Activated CD8-positive, alpha-beta T cell treated with anti-CD3 and anti-CD28 coated beads for 36 hours (primary cell): ENCODE measurements at regions of chr18 and their contacts with region 1.

Region 1: GRCh38 chr18:32158108-32158624 is 31.7 kb upstream of the MEP1B start:
- DNase-seq: peak; percentile 81
- ATAC-seq: peak; percentile 91
- H3K4me3 Mint-ChIP-seq: peak overlapping the region; percentile 52
- H3K27ac Mint-ChIP-seq: no peak overlapping the region
- H3K4me1 Mint-ChIP-seq: peaks cover 3% of the 10 kb centered on the region
- H3K27me3 Mint-ChIP-seq: peaks cover 3% of the 10 kb centered on the region
- CTCF ChIP-seq: peak; percentile 91

Region 2: DNA sequence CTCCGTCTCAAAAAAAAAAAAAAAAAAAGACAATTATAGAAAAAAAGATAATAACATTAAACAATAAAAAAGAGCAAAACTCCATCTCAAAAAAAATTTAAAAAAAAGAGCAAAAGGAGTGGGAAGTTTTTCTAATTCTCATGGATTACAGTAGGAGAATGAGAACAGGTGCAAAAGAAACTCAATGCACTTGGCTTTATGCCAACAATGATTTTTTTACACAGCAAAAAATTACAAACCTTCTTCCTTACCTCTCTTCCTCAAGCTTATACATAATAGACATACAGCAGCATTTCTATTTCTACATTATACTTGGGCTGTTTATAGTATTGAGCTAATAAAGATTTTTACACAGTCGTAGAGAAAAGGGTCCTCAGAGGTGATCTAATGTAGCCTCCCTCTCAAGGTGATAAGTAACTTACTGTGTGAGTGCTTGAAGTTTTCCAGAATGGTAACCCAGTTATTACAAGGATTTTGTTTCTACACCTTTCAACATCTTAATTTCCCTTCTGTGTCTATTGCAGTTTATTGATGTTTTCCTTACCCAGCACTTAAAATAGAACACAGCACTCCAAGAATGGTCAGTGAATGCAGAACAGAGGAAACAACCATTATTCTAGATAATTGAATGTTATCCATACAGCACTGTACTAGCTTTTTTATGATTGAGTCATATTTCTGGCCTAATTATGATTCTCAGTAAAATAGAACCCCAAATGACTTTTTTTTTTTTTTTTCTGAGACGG is 101.4 kb before region 1 on chr18:
- CTCF ChIA-PET with region 1: no interaction called
- POLR2A ChIA-PET with region 1: no interaction called
- intact Hi-C with region 1: no loop called
- DNase-seq: no peak
- ATAC-seq: no peak
- H3K4me3 Mint-ChIP-seq: no peak overlapping the region
- H3K27ac Mint-ChIP-seq: no peak overlapping the region
- H3K4me1 Mint-ChIP-seq: peaks cover 46% of the 10 kb centered on the region
- H3K27me3 Mint-ChIP-seq: no peaks in the 10 kb centered on the region
- CTCF ChIP-seq: no peak

Region 3: DNA sequence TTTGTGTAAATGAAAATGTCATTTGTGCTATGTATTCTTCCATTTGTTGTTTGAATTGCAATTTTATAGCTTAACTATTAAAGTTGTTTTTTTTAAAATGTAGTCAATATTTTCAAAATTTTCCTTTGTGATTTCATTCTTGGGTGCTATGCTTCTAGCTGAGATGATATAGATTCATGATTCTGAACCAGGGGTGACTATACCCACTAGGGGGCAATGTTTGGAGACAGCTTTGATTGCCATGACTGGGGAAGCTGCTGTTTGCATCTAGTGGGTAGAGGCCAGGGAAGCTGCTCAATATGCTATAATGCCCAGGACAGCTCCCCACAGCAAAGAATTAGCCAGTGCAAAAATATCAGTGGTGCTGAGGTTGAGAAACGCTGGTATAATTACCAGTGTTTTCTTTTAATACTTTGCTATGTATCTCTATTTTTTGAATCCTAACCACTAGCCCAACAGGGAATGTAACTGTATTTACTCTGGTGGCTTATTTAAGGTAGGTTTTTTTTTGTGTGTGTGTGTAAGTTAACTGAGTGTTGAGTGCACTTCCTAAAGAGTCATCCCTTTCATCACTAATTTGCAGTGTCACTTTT is 131.4 kb after region 1 on chr18:
- CTCF ChIA-PET with region 1: interaction called, 15 read pairs
- POLR2A ChIA-PET with region 1: no interaction called
- intact Hi-C with region 1: no loop called
- DNase-seq: peak; percentile 47
- ATAC-seq: no peak
- H3K4me3 Mint-ChIP-seq: no peak overlapping the region
- H3K27ac Mint-ChIP-seq: no peak overlapping the region
- H3K4me1 Mint-ChIP-seq: no peaks in the 10 kb centered on the region
- H3K27me3 Mint-ChIP-seq: peaks cover 4% of the 10 kb centered on the region
- CTCF ChIP-seq: peak; percentile 46

Region 4: GRCh38 chr18:32470713-32471633 is 312.8 kb after region 1 on chr18 and contains the start of gene GAREM1:
- CTCF ChIA-PET with region 1: interaction called, 13 read pairs
- POLR2A ChIA-PET with region 1: no interaction called
- intact Hi-C with region 1: no loop called
- DNase-seq: peak; percentile 79
- ATAC-seq: peak; percentile 95
- H3K4me3 Mint-ChIP-seq: peak within 1 kb of the TSS; percentile 60
- H3K27ac Mint-ChIP-seq: no peak within 1 kb of the TSS
- H3K4me1 Mint-ChIP-seq: peaks cover 18% of the 10 kb centered on the region
- H3K27me3 Mint-ChIP-seq: peaks cover 44% of the 10 kb centered on the region
- CTCF ChIP-seq: peak; percentile 50
- total RNA-seq, gene GAREM1: not detected

Region 5: GRCh38 chr18:32552421-32553030 is 394.4 kb after region 1 on chr18:
- CTCF ChIA-PET with region 1: interaction called, 52 read pairs
- POLR2A ChIA-PET with region 1: no interaction called
- intact Hi-C with region 1: loop called (anchors 1 kb)
- DNase-seq: peak; percentile 72
- ATAC-seq: peak; percentile 87
- H3K4me3 Mint-ChIP-seq: no peak overlapping the region
- H3K27ac Mint-ChIP-seq: no peak overlapping the region
- H3K4me1 Mint-ChIP-seq: no peaks in the 10 kb centered on the region
- H3K27me3 Mint-ChIP-seq: peaks cover 11% of the 10 kb centered on the region
- CTCF ChIP-seq: peak; percentile 69